ENCODE measurements at regions of chr12 and their contacts with region 1.

Region 1: GRCh38 chr12:949453-950191 is at the start of gene RAD52:
- DNase-seq: peak; percentile 92
- CTCF ChIP-seq: peak; percentile 97

Region 2: DNA sequence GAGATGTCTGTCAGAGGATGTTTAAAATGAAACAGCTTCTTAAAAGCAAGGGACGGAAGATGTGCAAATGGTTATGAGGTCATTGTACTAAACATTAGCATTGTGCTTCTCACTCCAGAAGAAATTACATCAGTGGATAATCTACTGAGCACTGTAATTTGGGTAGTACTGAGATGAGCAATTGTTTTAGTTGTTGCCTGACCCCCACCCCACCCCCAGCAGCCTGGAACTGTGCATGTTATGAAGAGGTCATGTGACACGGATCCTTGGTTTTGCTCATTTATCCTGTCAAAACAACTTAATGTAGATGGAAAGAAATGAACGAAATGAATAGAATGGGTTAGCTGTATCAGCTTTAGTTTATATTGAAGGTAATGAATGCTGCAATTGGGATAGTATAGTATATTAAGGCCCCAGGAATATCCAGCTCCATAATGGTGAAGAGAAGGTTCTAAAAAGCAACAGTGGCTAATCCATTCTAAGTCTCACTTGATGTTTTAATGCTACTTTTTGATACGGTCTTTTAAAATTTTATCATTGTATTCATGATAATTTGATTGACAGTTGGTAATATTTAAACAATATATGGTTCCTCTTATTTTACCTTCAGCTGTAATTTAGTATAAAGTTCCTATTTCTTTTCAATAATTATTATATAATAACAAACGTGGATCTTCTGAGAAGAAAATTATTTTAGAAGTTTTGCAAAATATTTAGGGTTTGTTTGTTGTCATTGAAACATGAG is 138.8 kb before region 1 on chr12:
- in situ Hi-C with region 1: loop called (anchors 10 kb)
- DNase-seq: peak; percentile 64
- CTCF ChIP-seq: no peak